AG04450 (cell line): ENCODE measurements at regions of chr22 and their contacts with region 1.

Region 1: GRCh38 chr22:40636380-40637182 is at the start of gene MRTFA:
- DNase-seq: peak; percentile 99
- H3K4me3 ChIP-seq: peak within 1 kb of the TSS; percentile 84
- H3K27ac ChIP-seq: peak within 1 kb of the TSS; percentile 83
- H3K27me3 ChIP-seq: no peaks in the 10 kb centered on the region
- CTCF ChIP-seq: no peak
- polyA plus RNA-seq, gene MRTFA: 6.8 and 11.6 TPM in 2 replicates

Region 2: GRCh38 chr22:40509401-40510134 is 127.0 kb before region 1 on chr22:
- CTCF ChIA-PET with region 1: interaction called, 6 read pairs
- POLR2A ChIA-PET with region 1: interaction called, 10 read pairs
- DNase-seq: peak; percentile 79
- H3K4me3 ChIP-seq: 0 out of 2 replicates have a peak overlapping the region, but pooled peaks have one; percentile 7
- H3K27ac ChIP-seq: peak overlapping the region; percentile 94
- H3K27me3 ChIP-seq: no peaks in the 10 kb centered on the region
- CTCF ChIP-seq: no peak

Region 3: DNA sequence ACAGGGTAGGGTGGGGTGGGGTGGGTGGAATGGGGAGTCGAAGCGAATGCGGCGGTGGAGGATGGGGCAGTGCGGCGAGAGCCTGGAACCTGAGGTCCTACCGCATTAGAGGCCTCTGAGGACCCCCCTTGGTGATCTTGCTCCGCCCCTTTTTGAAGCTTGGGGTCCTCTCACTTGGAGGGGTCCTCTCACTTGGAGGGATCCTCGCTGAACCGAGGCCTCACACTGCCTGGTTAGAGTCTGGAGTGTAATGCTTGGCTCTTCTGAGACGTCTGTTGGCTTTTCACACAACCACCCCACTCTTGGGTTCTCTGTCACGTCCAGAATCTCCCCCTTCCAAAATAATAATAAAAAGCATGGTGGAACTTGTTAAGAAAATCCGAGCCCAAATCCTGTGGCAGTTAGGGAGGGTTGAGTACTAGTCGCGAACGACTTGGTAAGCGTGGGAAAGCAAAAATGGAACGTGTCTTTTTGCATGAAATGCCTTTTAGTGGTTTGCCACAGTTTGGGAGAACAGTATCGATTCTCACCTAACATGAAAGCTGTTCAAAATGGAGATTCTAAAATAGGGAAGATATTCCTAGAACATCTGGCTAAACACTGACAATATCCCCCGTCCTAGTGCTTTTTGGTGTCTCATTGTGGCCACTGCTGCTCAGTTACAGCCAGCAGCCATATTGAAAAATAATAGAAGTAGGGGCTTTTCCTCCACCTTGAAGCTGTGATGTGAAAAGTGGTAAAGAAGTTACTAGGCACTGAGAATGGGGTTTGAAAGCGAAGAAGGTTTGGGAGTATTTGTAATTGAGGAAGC is 315.4 kb after region 1 on chr22:
- CTCF ChIA-PET with region 1: no interaction called
- POLR2A ChIA-PET with region 1: no interaction called
- DNase-seq: no peak
- H3K4me3 ChIP-seq: peak overlapping the region; percentile 91
- H3K27ac ChIP-seq: peak overlapping the region; percentile 71
- H3K27me3 ChIP-seq: no peaks in the 10 kb centered on the region
- CTCF ChIP-seq: no peak